Sigmoid colon (tissue), 7 donors: ENCODE measurements at regions of chr9 and their contacts with region 1.

Region 1: DNA sequence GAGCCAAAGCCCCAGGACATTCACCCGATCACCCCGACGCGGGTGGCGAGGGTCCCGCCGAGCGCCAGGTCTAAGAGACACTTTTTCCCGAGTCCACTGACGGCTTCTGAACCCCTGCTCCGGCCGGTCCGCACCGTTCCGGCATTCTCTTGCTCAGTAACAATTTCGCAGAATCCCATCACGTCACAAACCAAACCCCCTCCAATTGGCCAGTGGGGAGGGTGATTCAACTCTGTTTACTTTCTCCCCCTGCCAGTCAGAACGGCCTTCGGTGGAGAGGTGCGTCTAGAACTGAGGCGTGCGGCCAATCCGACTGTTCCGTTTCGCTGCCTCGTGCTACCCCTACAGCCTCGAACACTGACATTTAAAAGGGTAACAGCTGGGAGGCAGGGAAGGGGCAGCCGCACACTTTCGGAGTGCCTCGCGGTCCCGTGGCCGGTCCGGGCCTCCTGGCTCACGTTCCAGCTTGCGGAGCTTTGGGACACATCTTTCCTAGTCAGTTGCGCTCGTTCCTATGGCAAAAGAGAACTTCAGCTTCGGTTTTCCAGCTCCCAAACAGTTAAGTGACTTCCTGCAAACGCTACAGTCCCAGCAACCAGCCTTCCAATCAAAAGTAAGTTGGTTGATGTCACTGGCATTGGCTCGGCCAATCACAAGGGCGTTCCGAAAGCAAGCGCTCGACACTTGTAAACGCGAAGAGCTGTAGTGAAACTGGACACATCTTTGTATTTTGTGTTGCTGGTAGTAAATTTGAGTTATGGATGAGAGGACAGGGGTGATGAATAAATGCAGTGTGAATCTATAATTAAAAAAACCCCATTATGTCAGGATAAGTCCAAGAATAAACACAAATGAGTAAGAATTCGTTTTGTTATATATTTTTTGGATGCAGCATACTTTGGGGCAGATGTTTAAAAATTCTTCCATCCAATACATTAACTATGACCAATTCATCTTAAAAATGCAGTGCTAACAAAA is at the start of gene KLF9:
- DNase-seq: peak; percentile 100
- H3K4me3 ChIP-seq: peak within 1 kb of the TSS; percentile 79 to 96 (median 84)
- H3K27ac ChIP-seq: peak within 1 kb of the TSS; percentile 98 to 100 (median 99)
- H3K4me1 ChIP-seq: peaks cover 0 to 54% (median 46%) of the 10 kb centered on the region in 4 donors
- H3K27me3 ChIP-seq: no peaks in the 10 kb centered on the region
- CTCF ChIP-seq: no peak
- EP300 ChIP-seq: peak; percentile 83 to 97 (median 93)
- POLR2A ChIP-seq: peak; percentile 97
- total RNA-seq, gene KLF9: 120 to 184 (median 159) TPM

Region 2: DNA sequence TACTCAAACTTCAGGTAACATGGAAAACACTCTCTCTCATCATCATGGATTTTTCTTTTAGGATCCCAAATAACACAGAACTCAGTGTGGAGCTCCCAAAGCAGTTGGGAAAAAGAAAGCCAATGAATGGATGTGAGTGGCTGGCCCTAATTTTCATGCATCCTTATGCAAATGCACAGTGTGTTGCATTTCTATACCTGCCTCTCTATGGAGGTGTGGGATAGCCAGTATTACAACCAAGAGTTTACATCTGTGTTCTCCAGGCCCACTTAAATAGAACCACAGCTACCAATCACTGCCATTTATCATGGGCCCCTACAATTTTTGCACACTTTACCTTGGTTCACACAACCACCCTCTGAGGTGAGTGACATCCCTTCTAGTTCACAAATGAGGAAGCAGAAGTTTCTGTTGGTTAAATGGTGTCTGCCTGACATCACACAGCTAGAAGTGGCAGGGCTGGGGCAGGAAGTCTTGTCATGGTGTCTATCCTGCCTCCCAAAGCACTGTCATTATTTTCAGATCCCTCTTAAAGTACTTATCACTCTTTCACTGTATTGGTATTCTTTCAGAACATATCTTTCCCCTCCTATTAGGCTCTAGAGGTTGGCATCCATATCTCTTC is 353.1 kb before region 1 on chr9:
- intact Hi-C with region 1: loop called (anchors 5 kb)
- DNase-seq: no peak
- H3K4me3 ChIP-seq: no peak overlapping the region
- H3K27ac ChIP-seq: peak overlapping the region; percentile 87 to 98 (median 89)
- H3K4me1 ChIP-seq: peaks cover 0 to 99% (median 82%) of the 10 kb centered on the region in 4 donors
- H3K27me3 ChIP-seq: no peaks in the 10 kb centered on the region
- CTCF ChIP-seq: no peak
- EP300 ChIP-seq: no peak
- POLR2A ChIP-seq: no peak

Region 3: GRCh38 chr9:70258692-70259511 is 155.2 kb before region 1 on chr9 and contains the start of gene SMC5:
- intact Hi-C with region 1: loop called (anchors 5 kb)
- DNase-seq: peak; percentile 94
- H3K4me3 ChIP-seq: peak within 1 kb of the TSS; percentile 71 to 77 (median 74)
- H3K27ac ChIP-seq: peak within 1 kb of the TSS; percentile 90 to 95 (median 91)
- H3K4me1 ChIP-seq: peaks cover 0 to 74% (median 57%) of the 10 kb centered on the region in 4 donors
- H3K27me3 ChIP-seq: no peaks in the 10 kb centered on the region
- CTCF ChIP-seq: no peak
- EP300 ChIP-seq: no peak
- POLR2A ChIP-seq: peak; percentile 91 to 95
- total RNA-seq, gene SMC5: 20.1 to 31.6 (median 23.4) TPM

Region 4: DNA sequence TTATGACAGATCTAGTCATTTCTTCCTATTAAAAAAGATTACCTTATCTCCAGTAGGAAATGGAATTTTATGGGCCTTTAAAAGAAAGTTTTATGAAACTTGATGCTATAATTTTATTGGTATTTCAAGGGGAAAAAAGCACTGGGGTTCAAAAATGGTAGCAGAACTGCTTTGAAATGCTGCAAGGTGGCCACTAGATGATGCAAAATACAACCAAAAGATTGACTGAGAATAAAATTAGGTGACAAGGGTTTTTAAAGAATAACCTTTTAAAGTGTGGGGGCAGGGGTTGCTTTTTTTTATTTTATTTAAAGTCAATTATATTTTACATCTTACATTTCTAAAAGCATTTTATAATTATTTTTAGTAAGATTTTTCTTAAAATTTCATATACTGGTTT is 61.3 kb before region 1 on chr9:
- intact Hi-C with region 1: loop called (anchors 5 kb)
- DNase-seq: no peak
- H3K4me3 ChIP-seq: no peak overlapping the region
- H3K27ac ChIP-seq: peak overlapping the region; percentile 14 to 51 (median 34)
- H3K4me1 ChIP-seq: peaks cover 0 to 10% (median 4%) of the 10 kb centered on the region in 4 donors
- H3K27me3 ChIP-seq: no peaks in the 10 kb centered on the region
- CTCF ChIP-seq: peak; percentile 70 to 91 (median 72)
- EP300 ChIP-seq: no peak
- POLR2A ChIP-seq: no peak

Region 5: DNA sequence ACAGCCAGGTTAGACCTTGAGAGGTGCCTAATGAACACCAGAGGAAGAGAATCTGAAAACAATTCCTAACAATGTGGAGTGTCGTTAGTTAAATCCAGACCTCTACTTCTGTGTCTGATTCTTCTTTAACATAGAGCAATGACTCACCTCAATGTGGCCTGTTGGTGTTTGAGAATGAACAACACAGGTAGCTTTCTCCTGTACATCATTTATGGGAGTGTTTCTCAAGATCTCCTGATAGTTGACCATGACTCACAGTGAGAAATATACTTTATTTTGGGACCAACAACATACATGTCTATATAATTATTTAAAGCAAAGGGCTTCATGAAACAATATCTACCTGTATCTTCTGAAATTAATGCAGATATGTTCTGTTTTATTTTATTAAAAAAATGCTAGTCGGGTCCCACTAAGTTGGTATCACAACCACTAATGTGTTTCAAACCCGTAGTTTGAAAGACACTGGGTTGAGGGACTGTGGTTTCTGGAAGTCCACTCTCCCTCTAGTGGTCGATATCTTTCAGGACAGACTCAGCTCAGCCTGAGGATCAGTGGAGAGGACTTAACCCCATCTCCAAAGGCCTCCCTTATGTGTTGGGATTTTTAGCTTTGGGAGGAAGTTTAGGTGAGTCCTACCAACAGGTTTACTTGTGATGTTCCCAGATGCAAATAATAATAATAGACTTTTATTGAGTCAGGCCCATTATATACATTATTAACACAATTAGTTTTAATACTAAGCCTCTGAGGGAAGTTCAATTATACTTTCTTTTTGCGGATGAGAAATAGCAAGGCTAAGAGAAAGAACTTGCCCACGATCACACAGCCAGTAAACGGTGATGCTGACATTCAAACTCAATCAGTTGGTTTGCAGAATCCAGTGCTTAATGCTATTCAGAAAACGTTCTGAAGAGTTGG is 70.4 kb after region 1 on chr9:
- intact Hi-C with region 1: no loop called
- DNase-seq: peak; percentile 80
- H3K4me3 ChIP-seq: no peak overlapping the region
- H3K27ac ChIP-seq: peak overlapping the region; percentile 67 to 98 (median 92)
- H3K4me1 ChIP-seq: peaks cover 4 to 88% (median 76%) of the 10 kb centered on the region in 4 donors
- H3K27me3 ChIP-seq: no peaks in the 10 kb centered on the region
- CTCF ChIP-seq: peak in 3 of 4 experiments; percentile 73 to 85 (median 81)
- EP300 ChIP-seq: peak in 1 of 4 donors; percentile 15
- POLR2A ChIP-seq: no peak